ENCODE measurements at regions of chr12 and their contacts with region 1.

Region 1: GRCh38 chr12:70121557-70121956 is 121.7 kb upstream of the CNOT2 start:
- DNase-seq: no peak
- H3K4me3 ChIP-seq: no peak overlapping the region
- H3K27ac ChIP-seq: no peak overlapping the region
- H3K4me1 ChIP-seq: no peaks in the 10 kb centered on the region
- H3K27me3 ChIP-seq: no peaks in the 10 kb centered on the region
- CTCF ChIP-seq: no peak
- POLR2A ChIP-seq: no peak

Region 2: DNA sequence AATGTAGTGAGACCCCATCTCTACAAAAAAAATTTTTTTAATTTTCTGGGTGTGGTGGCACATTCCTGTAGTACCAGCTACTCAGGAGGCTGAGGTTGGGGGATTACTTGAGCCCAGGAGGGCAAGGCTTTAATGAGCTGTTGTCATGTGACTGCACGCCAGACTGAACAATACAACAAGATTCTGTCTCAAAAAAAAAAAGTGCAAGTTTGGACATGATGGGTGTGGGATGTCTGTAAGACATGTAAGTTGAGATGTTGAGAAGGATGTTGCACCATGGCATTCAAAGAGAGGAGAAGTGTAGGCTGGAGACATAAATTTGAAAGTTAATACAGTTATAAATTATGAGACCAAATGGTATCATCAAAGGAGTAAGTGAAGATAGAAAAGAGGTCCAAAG is 738.5 kb before region 1 on chr12:
- intact Hi-C with region 1: loop called (anchors 5 kb)
- DNase-seq: no peak
- H3K4me3 ChIP-seq: no peak overlapping the region
- H3K27ac ChIP-seq: no peak overlapping the region
- H3K4me1 ChIP-seq: no peaks in the 10 kb centered on the region
- H3K27me3 ChIP-seq: no peaks in the 10 kb centered on the region
- CTCF ChIP-seq: no peak
- POLR2A ChIP-seq: no peak

Region 3: DNA sequence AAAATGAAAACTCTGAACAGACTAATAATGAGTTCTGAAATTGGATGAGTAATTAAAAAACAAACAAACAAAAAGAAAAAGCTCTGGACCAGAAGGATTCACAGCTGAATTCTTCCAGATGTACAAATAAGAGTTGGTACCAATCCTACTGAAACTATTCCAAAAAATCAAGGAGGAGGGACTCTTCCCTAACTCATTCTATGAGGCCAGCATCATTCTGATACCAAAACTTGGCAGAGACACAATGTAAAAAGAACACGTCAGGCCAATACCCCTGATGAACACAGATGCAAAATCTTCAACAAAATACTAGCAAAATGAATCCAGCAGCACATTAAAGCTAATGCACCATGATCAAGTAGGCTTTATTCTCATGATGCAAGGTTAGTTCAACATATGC is 62.2 kb before region 1 on chr12:
- intact Hi-C with region 1: no loop called
- DNase-seq: no peak
- H3K4me3 ChIP-seq: no peak overlapping the region
- H3K27ac ChIP-seq: no peak overlapping the region
- H3K4me1 ChIP-seq: no peaks in the 10 kb centered on the region
- H3K27me3 ChIP-seq: no peaks in the 10 kb centered on the region
- CTCF ChIP-seq: no peak
- POLR2A ChIP-seq: no peak

Region 4: DNA sequence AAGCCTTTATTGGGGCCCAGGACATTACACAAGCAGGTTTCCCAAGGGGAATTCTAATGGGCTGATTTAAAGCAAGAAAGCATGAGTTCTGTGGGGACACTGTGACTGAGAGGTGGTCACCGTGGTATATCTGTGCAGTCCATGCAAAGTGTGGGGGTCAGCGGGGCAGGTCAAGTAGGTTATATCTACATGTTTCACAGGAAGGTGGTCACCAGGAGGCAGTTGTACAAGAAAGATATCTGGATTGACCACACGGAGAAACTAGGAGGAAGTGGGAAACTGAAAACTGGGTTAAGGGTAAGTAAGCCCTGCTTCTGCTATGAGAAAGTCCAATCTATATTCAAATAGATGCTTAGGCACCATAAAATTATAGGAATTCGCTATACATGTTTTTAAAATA is 43.9 kb after region 1 on chr12:
- intact Hi-C with region 1: no loop called
- DNase-seq: no peak
- H3K4me3 ChIP-seq: no peak overlapping the region
- H3K27ac ChIP-seq: no peak overlapping the region
- H3K4me1 ChIP-seq: no peaks in the 10 kb centered on the region
- H3K27me3 ChIP-seq: no peaks in the 10 kb centered on the region
- CTCF ChIP-seq: no peak
- POLR2A ChIP-seq: no peak

Region 5: DNA sequence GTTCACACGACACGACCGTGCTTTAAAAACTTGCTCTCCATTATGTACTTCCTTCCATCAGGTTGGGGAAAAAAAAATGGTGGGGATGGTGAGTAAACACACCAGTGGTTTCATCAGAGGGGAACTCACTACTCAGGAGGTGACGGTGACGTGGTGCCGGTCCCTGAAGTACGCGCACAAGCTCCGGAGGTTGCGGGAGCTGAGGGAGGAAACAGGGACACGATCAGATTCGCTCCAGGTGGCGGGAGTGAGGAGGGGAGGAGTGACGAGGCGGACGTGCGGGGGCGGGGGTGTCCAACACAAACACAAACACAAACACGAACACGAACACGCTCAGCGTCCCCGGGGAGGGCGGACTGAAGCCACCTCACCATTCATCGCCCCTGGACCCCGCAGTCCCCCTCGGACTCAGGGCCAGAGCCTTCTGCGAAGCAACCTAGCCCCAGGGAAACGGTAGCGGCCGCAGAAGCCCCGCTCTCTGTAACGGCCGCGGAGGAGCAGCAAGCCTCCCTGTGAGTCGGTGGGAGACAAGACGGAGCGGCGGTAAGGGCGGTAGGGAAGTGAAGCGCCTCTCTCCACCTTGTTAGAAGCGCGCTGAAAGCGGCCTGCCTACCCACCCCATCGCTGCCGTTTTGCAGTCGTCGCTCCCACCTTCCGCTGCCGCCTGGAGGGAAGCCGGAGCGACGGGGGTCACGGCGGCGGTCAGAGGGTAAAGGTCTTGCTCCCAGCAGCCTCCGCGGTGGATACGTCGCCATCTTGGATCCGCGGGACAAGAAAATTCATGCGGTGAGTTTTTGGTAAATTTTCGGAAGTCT is 121.3 kb after region 1 on chr12 and contains the start of gene CNOT2:
- intact Hi-C with region 1: no loop called
- DNase-seq: peak in 1 of 2 donors; percentile 91
- H3K4me3 ChIP-seq: peak within 1 kb of the TSS; percentile 97
- H3K27ac ChIP-seq: peak within 1 kb of the TSS; percentile 99
- H3K4me1 ChIP-seq: peaks cover 56% of the 10 kb centered on the region
- H3K27me3 ChIP-seq: no peaks in the 10 kb centered on the region
- CTCF ChIP-seq: no peak
- POLR2A ChIP-seq: peak in 1 of 2 donors; percentile 18
- total RNA-seq, gene CNOT2: 176 TPM

Region 6: DNA sequence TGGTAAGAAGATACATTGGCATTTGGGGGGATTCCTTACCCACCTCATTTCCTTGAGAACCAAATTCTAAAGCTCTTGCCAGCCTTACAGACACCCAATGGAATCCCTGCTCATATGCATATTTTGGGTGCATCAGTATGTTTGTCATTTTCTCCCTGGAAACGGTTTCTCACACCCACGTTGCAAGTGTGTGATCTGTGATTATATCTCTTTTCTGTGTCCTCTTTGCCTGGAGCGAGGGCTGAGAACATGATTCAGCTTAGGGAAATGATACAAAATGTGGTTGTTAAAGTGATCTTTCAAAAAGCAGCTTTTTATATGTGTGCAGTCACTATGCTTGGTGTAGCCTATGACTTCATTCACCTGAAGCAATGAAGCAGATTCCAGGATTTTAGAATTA is 296.5 kb after region 1 on chr12:
- intact Hi-C with region 1: no loop called
- DNase-seq: no peak
- H3K4me3 ChIP-seq: no peak overlapping the region
- H3K27ac ChIP-seq: no peak overlapping the region
- H3K4me1 ChIP-seq: no peaks in the 10 kb centered on the region
- H3K27me3 ChIP-seq: no peaks in the 10 kb centered on the region
- CTCF ChIP-seq: no peak
- POLR2A ChIP-seq: no peak

Measured in vagina (tissue), 2 donors.